Psoas muscle (tissue), 8 donors: ENCODE measurements at regions of chr3 and their contacts with region 1.

Region 1: GRCh38 chr3:49942651-49943050 is 2.7 kb downstream of the RBM6 start:
- DNase-seq: no peak
- ATAC-seq: no peak
- H3K4me3 ChIP-seq: no peak overlapping the region
- H3K27ac ChIP-seq: no peak overlapping the region
- H3K4me1 ChIP-seq: peaks cover 13% of the 10 kb centered on the region
- H3K27me3 ChIP-seq: no peaks in the 10 kb centered on the region
- CTCF ChIP-seq: no peak

Region 2: GRCh38 chr3:49683162-49683561 is 259.5 kb before region 1 on chr3:
- intact Hi-C with region 1: no loop called
- DNase-seq: no peak
- ATAC-seq: no peak
- H3K4me3 ChIP-seq: no peak overlapping the region
- H3K27ac ChIP-seq: no peak overlapping the region
- H3K4me1 ChIP-seq: peaks cover 3% of the 10 kb centered on the region
- H3K27me3 ChIP-seq: no peaks in the 10 kb centered on the region
- CTCF ChIP-seq: no peak

Region 3: GRCh38 chr3:49856181-49857005 is 86.3 kb before region 1 on chr3 and contains the start of gene TRAIP:
- intact Hi-C with region 1: no loop called
- DNase-seq: peak; percentile 92 to 97
- ATAC-seq: peak; percentile 99 to 100 (median 100)
- H3K4me3 ChIP-seq: peak within 1 kb of the TSS; percentile 79
- H3K27ac ChIP-seq: peak within 1 kb of the TSS; percentile 88
- H3K4me1 ChIP-seq: no peaks in the 10 kb centered on the region
- H3K27me3 ChIP-seq: no peaks in the 10 kb centered on the region
- CTCF ChIP-seq: no peak
- total RNA-seq, gene TRAIP: 0.36 to 1.2 (median 0.81) TPM

Region 4: DNA sequence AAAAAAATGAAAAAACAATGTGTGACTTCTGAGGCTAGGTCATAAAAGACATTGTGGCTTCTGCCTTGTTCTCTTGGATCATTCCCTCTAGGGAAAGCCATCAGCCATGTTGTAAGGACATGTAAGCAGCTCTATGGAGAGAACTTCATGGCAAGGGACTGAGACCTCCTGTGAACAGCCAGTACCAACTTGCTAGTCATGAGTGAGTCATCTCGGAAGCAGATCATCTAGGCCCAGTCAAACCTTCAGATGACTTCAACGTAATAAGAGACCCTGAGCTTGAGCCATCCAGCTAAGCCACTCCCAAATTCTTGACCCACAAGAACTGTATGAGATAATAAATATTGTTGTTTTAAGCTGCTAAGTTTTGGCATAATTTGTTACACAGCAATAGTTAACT is 18.0 kb before region 1 on chr3:
- intact Hi-C with region 1: loop called in 1 of 2 experiments (anchors 2 kb)
- DNase-seq: no peak
- ATAC-seq: peak; percentile 62 to 71 (median 64)
- H3K4me3 ChIP-seq: no peak overlapping the region
- H3K27ac ChIP-seq: peak overlapping the region; percentile 70
- H3K4me1 ChIP-seq: peaks cover 21% of the 10 kb centered on the region
- H3K27me3 ChIP-seq: no peaks in the 10 kb centered on the region
- CTCF ChIP-seq: no peak